Breast epithelium (tissue), 4 donors: ENCODE measurements at regions of chr14 and their contacts with region 1.

Region 1: GRCh38 chr14:94439453-94440057 is 13.0 kb downstream of the SERPINA11 start:
- DNase-seq: no peak
- H3K4me3 ChIP-seq: no peak overlapping the region
- H3K27ac ChIP-seq: no peak overlapping the region
- H3K4me1 ChIP-seq: no peaks in the 10 kb centered on the region
- H3K27me3 ChIP-seq: no peaks in the 10 kb centered on the region
- CTCF ChIP-seq: no peak
- POLR2A ChIP-seq: no peak

Region 2: GRCh38 chr14:94481468-94482131 is 42.0 kb after region 1 on chr14:
- intact Hi-C with region 1: loop called (anchors 1 kb)
- DNase-seq: no peak
- H3K4me3 ChIP-seq: no peak overlapping the region
- H3K27ac ChIP-seq: no peak overlapping the region
- H3K4me1 ChIP-seq: no peaks in the 10 kb centered on the region
- H3K27me3 ChIP-seq: peaks cover 0 to 5% of the 10 kb centered on the region in 2 donors
- CTCF ChIP-seq: no peak
- POLR2A ChIP-seq: no peak

Region 3: DNA sequence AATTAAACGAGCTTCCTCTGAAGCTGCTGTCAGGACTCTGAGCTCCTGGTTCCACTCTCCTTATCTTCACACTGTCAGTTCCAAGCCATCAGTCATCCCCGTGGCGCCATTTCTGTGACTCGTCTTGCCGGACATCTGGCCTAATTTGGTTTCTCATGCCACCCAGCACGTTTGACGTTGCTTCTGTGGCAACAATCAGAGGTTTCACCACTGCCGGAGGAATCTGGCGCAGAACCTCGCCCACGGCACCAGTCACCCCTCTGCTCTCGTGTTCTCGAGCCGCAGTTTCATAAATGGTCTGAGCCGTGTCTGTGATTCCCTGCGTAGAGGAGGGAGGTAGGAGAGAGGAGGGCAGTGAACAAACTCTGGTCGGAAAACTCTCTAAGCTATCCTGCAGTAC is 1846.1 kb after region 1 on chr14:
- intact Hi-C with region 1: loop called (anchors 5 kb)
- DNase-seq: no peak
- H3K4me3 ChIP-seq: no peak overlapping the region
- H3K27ac ChIP-seq: no peak overlapping the region
- H3K4me1 ChIP-seq: no peaks in the 10 kb centered on the region
- H3K27me3 ChIP-seq: no peaks in the 10 kb centered on the region
- CTCF ChIP-seq: no peak
- POLR2A ChIP-seq: no peak